WTC11 (cell line): ENCODE measurements at regions of chr1 and their contacts with region 1.

Region 1: GRCh38 chr1:234957330-234958065 is 171.1 kb downstream of the TOMM20 start:
- DNase-seq: peak; percentile 37
- ATAC-seq: peak; percentile 82
- H3K4me3 Mint-ChIP-seq: peak overlapping the region; percentile 22; the same call in 1 of the 2 replicates
- H3K27ac Mint-ChIP-seq: peak overlapping the region; percentile 99
- H3K4me1 Mint-ChIP-seq: peaks cover 69% of the 10 kb centered on the region
- H3K27me3 Mint-ChIP-seq: no peaks in the 10 kb centered on the region
- CTCF ChIP-seq: no peak

Region 2: DNA sequence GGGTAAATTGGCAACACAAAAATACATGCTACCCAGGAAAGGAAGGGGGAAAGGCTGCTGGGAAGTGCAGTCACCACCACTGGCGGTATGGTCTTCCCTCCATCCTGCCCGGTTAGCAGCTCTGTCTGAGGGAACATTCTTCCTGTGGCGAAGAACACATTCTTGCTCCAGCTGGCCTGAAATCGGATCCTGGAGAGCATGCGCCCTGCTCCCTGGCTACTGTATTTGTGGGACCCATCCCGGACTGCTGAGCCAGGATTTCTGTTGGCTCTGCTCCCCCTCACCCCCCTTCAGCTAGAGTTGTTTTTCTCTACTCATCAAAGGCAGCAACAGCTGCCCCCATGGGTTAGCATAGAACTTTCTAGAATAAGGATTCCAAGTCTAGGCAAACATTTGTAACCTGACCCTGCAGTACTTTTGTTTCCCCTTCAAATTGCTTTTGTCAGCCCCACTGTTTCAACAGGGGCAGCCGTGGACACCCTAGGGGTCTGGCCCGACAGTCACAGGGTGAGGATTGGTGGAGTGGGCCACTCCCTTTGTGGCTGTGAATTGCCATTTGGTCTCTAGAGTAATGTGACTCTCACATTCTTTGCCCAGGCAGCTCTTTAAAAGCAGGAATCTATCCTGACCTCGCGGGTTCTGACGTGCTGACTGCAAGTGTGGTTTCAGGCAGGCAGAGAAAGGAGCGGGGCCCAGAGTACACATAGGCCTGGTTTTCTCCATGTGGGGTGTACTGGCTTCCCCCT is 13.4 kb after region 1 on chr1:
- CTCF ChIA-PET with region 1: interaction called, 15 read pairs
- POLR2A ChIA-PET with region 1: interaction called, 11 read pairs
- DNase-seq: peak; percentile 76
- ATAC-seq: peak; percentile 76
- H3K4me3 Mint-ChIP-seq: peak overlapping the region; percentile 63
- H3K27ac Mint-ChIP-seq: peak overlapping the region; percentile 90
- H3K4me1 Mint-ChIP-seq: peaks cover 45% of the 10 kb centered on the region
- H3K27me3 Mint-ChIP-seq: peaks cover 14% of the 10 kb centered on the region
- CTCF ChIP-seq: no peak